ENCODE measurements at regions of chr10 and their contacts with region 1.

Region 1: GRCh38 chr10:13087986-13088618 is 11.9 kb upstream of the OPTN start:
- DNase-seq: no peak
- ATAC-seq: no peak
- H3K4me3 Mint-ChIP-seq: no peak overlapping the region
- H3K27ac Mint-ChIP-seq: no peak overlapping the region
- H3K4me1 Mint-ChIP-seq: peaks cover 11% of the 10 kb centered on the region
- H3K27me3 Mint-ChIP-seq: no peaks in the 10 kb centered on the region
- CTCF ChIP-seq: no peak

Region 2: GRCh38 chr10:12922117-12922900 is 165.8 kb before region 1 on chr10:
- CTCF ChIA-PET with region 1: no interaction called
- POLR2A ChIA-PET with region 1: no interaction called
- DNase-seq: no peak
- ATAC-seq: no peak
- H3K4me3 Mint-ChIP-seq: no peak overlapping the region
- H3K27ac Mint-ChIP-seq: no peak overlapping the region
- H3K4me1 Mint-ChIP-seq: no peaks in the 10 kb centered on the region
- H3K27me3 Mint-ChIP-seq: no peaks in the 10 kb centered on the region
- CTCF ChIP-seq: no peak

Region 3: DNA sequence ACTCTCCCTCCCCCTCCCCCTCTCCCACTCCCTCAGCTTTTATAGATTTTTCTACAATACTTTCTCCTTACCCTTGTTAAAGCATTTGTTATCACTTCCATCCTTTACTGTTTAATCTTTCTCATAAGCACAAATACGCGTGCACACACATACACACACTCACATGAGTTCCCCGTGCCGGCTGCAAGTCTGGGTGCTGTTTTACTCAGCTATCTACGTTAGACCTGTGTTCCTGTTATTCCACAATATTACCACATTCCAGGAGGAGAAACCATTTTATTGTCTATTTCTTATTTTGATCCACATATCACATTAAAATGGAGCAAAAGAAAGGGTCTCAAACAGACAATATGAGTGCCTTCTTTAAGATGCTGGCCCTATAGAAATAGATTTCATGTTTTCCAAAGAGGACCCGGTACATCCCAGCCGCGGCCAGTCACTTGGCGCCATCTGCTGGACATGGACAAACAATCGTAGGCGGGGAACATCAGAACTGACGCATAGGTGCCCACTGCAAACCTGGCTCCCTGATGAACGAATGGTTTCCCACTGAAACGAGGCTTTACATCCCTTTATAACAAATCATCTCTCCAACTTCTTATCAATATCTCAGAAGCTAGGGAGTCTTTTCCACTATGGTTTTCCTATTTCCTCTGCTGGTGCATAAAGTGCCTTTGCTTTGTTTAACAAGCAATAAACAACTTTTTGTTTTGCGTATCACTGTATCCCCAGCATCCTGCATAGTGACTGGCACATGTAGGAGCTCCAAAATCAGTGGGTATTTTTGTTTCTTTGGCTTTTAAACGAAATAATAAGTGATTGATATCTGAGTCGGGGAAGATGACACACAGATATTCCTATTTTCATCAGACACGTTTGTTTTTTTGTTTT is 13.3 kb before region 1 on chr10:
- CTCF ChIA-PET with region 1: interaction called, 15 read pairs
- POLR2A ChIA-PET with region 1: no interaction called
- DNase-seq: peak; percentile 79
- ATAC-seq: peak; percentile 93
- H3K4me3 Mint-ChIP-seq: no peak overlapping the region
- H3K27ac Mint-ChIP-seq: no peak overlapping the region
- H3K4me1 Mint-ChIP-seq: peaks cover 10% of the 10 kb centered on the region
- H3K27me3 Mint-ChIP-seq: no peaks in the 10 kb centered on the region
- CTCF ChIP-seq: peak; percentile 79

Measured in WTC11 (cell line).